ENCODE measurements at regions of chr9 and their contacts with region 1.

Region 1: DNA sequence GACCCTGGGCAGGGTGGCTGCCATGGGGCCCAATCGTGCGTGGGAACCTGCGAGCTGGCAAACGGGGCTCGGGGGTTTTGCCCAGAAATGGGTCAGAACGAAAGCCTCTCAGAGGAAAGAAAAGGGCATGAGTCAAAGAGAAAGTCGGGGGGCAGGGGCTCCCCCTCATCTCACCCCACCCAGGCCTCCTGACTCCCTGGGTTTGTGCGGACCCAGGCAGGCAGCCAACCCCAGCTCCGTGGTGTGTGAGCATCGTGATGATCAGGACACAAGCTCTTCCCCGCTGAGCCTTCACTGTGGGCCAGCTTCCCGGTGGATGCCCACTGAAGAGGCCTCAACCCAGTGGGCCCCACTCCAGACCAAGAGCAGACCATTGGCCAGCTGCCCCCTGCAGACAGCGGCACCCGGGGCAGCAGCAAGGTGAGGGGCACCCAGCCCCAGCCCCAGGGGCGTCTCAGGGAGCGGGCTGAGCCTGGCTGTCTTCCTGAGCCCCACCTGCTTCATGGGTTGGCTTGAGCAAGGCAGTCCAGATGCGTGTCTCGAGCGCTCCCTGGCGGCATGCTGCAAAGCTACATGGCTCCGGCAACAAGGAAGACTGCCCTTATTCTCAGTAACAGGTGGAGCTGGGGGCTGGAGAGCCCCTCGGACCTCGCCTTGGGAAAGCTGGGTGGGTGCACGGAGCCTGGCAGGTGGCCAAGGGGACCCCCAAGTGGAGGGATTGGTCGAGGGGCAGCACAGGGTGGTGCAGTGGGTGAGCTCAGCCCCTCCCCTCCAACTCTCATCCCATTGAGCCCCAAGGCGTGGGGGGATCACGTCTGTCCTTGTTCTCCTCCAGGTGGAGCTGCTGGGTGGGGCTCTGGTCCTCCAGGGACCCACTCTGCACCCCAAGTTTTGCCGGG is 3.2 kb upstream of the FUT7 start:
- DNase-seq: peak; percentile 81 to 92 (median 83)
- H3K4me3 ChIP-seq: peak overlapping the region; percentile 58
- H3K4me3 Mint-ChIP-seq: peak overlapping the region; percentile 72 to 89 (median 76)
- H3K27ac ChIP-seq: peak overlapping the region; percentile 38
- H3K27ac Mint-ChIP-seq: peak overlapping the region; percentile 75 to 96 (median 89)
- H3K4me1 ChIP-seq: peaks cover 40% of the 10 kb centered on the region
- H3K4me1 Mint-ChIP-seq: peaks cover 35 to 46% (median 36%) of the 10 kb centered on the region in 3 donors
- H3K27me3 ChIP-seq: no peaks in the 10 kb centered on the region
- H3K27me3 Mint-ChIP-seq: no peaks in the 10 kb centered on the region

Region 2: GRCh38 chr9:136799854-136800657 is 235.1 kb before region 1 on chr9:
- CTCF ChIA-PET with region 1: interaction called, 15 read pairs
- POLR2A ChIA-PET with region 1: no interaction called
- DNase-seq: peak; percentile 72 to 94 (median 88)
- H3K4me3 ChIP-seq: peak overlapping the region; percentile 66
- H3K4me3 Mint-ChIP-seq: peak overlapping the region; percentile 43 to 89 (median 83)
- H3K27ac ChIP-seq: peak overlapping the region; percentile 38
- H3K27ac Mint-ChIP-seq: peak overlapping the region in 6 of 8 donors; percentile 53 to 86 (median 77)
- H3K4me1 ChIP-seq: peaks cover 30% of the 10 kb centered on the region
- H3K4me1 Mint-ChIP-seq: peaks cover 11 to 28% (median 25%) of the 10 kb centered on the region in 3 donors
- H3K27me3 ChIP-seq: no peaks in the 10 kb centered on the region
- H3K27me3 Mint-ChIP-seq: peaks cover 0 to 6% of the 10 kb centered on the region in 2 donors

Region 3: GRCh38 chr9:136885950-136886578 is 149.0 kb before region 1 on chr9 and contains the start of gene TRAF2:
- CTCF ChIA-PET with region 1: interaction called, 10 read pairs
- POLR2A ChIA-PET with region 1: no interaction called
- DNase-seq: peak; percentile 96 to 98 (median 96)
- H3K4me3 ChIP-seq: peak within 1 kb of the TSS; percentile 75
- H3K4me3 Mint-ChIP-seq: peak within 1 kb of the TSS; percentile 84 to 94 (median 86)
- H3K27ac ChIP-seq: peak within 1 kb of the TSS; percentile 79
- H3K27ac Mint-ChIP-seq: peak within 1 kb of the TSS; percentile 83 to 99 (median 95)
- H3K4me1 ChIP-seq: peaks cover 41% of the 10 kb centered on the region
- H3K4me1 Mint-ChIP-seq: peaks cover 26 to 64% (median 32%) of the 10 kb centered on the region in 3 donors
- H3K27me3 ChIP-seq: no peaks in the 10 kb centered on the region
- H3K27me3 Mint-ChIP-seq: no peaks in the 10 kb centered on the region
- total RNA-seq, gene TRAF2: 53.2 to 60.5 TPM

Region 4: DNA sequence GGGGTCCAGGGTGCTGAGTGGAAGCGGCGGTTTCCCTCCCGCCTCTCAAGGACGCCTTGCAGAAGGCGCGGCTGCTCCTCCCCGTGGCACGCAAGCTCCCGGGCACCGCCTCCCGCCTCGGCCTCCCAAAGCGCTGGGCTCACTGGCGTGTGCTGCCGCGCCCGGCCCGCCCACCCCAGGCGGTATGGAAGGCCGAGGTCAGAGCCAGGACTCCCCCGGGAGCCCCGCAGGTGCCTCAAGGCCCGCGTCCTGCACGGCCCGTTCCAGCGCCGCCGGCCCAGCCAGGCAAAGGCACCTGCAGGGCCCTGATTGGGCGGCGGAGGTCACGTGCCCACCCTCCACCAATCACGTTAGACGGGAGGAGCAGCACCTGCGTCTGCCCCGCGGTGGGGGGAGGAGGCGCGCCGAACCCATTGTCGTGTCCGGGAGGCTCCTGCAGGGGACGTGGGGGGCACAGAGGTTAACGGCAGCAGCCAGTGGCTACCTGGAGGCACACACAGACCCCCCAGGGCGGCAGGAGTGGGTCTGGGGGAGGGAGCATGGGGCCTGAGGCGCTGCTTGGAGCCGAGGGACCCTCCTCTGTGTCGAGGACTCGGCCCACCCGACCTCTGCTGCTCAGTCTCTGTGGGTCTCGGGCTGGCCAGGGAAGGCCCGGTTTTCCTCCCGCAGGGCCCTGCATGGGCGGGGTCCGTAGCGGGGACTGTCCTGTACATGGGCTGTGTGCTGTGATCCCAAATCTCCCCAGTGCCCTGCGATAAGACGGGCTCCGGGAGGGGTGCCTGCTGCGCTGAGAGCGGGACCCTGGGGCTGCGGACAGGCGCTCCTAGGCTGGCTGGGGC is 85.1 kb before region 1 on chr9:
- CTCF ChIA-PET with region 1: interaction called, 159 read pairs
- POLR2A ChIA-PET with region 1: interaction called, 18 read pairs
- DNase-seq: peak; percentile 93 to 98 (median 97)
- H3K4me3 ChIP-seq: peak overlapping the region; percentile 77
- H3K4me3 Mint-ChIP-seq: peak overlapping the region; percentile 81 to 92 (median 87)
- H3K27ac ChIP-seq: peak overlapping the region; percentile 78
- H3K27ac Mint-ChIP-seq: peak overlapping the region; percentile 80 to 94 (median 86)
- H3K4me1 ChIP-seq: peaks cover 14% of the 10 kb centered on the region
- H3K4me1 Mint-ChIP-seq: peaks cover 0 to 34% (median 7%) of the 10 kb centered on the region in 3 donors
- H3K27me3 ChIP-seq: no peaks in the 10 kb centered on the region
- H3K27me3 Mint-ChIP-seq: no peaks in the 10 kb centered on the region

Region 5: DNA sequence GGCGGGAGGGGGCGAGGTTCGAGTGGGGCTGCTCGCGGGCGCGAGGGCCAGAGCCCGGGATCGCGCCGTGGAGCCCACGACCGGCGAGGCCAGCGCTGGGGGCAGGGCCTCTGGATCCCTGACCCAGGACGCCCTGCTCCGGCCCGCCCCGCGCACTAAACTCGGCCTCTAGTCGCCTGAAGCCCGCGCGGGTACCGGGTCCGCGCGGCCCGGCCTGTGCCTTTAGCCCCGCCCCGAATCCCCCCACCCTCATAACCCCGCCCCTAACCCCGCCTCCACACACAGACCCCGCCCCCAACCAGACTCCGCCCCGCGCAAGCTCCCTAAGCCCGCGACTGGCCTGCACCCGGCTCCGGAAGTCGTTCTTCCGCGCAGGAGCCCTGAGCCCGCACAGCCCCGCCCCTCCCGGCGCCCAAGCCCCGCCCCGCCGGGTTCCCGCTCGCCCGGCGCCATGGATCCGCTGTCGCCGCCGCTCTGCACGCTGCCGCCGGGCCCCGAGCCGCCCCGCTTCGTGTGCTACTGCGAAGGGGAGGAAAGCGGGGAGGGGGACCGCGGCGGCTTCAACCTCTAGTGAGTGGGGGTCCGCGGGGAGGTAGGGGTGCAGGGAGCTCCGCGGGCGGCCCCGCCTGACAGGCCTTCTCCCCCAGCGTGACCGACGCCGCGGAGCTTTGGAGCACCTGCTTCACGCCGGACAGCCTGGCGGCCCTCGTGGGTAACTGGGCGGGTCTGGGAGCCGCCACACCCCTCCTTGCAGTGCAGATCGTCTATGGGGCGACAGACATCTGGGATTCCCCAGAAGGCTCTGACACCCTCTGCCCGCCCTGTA is 42.9 kb before region 1 on chr9 and contains the start of gene PAXX:
- CTCF ChIA-PET with region 1: interaction called, 72 read pairs
- POLR2A ChIA-PET with region 1: interaction called, 5 read pairs
- DNase-seq: peak; percentile 91 to 95 (median 92)
- H3K4me3 ChIP-seq: peak within 1 kb of the TSS; percentile 65
- H3K4me3 Mint-ChIP-seq: peak within 1 kb of the TSS; percentile 84 to 95 (median 87)
- H3K27ac ChIP-seq: peak within 1 kb of the TSS; percentile 83
- H3K27ac Mint-ChIP-seq: peak within 1 kb of the TSS; percentile 92 to 98 (median 96)
- H3K4me1 ChIP-seq: peaks cover 28% of the 10 kb centered on the region
- H3K4me1 Mint-ChIP-seq: peaks cover 19 to 50% (median 22%) of the 10 kb centered on the region in 3 donors
- H3K27me3 ChIP-seq: no peaks in the 10 kb centered on the region
- H3K27me3 Mint-ChIP-seq: peaks cover 2 to 3% of the 10 kb centered on the region in 2 donors
- total RNA-seq, gene PAXX: 78.4 to 82.2 TPM

Region 6: DNA sequence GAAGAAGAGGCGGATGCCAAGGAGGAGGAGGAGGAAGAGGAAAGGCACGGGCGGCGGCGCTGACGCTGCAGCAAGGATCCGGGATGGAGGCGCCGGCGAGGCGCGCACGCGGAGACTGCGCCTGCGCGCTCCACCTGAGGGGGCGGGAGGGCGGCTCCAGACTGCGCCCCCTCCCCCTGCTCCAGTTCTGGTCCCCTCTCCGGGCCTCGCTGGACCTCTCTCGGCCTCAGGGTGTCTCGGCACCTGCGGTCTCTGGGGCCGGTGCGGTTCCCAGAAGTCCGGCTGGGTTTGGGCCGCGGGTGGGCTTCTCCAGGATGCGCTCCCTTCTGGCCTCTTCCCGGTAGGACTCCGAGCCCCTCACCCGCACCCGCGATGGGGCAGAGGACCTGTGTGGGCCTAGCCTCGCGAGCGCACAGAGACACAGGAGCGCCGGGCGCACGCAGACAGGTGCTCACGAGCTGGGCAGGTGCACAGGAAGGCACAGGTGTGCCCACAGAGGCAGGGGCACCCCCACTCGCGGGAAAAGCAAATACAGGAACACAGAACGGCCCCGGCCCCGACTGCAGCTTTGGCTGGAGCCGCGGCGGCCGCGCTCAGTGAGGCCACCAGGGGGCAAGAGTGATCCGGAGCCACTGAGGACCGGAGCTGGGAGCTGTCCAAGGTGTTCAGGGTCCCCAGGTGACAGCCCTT is 11.1 kb after region 1 on chr9 and contains the start of gene NPDC1:
- CTCF ChIA-PET with region 1: interaction called, 28 read pairs
- POLR2A ChIA-PET with region 1: interaction called, 3 read pairs
- DNase-seq: peak; percentile 68 to 83 (median 71)
- H3K4me3 ChIP-seq: peak within 1 kb of the TSS; percentile 47
- H3K4me3 Mint-ChIP-seq: peak within 1 kb of the TSS; percentile 70 to 87 (median 86)
- H3K27ac ChIP-seq: peak within 1 kb of the TSS; percentile 24
- H3K27ac Mint-ChIP-seq: peak within 1 kb of the TSS in 4 of 8 donors; percentile 38 to 60 (median 44)
- H3K4me1 ChIP-seq: peaks cover 27% of the 10 kb centered on the region
- H3K4me1 Mint-ChIP-seq: peaks cover 6 to 26% (median 13%) of the 10 kb centered on the region in 3 donors
- H3K27me3 ChIP-seq: peaks cover 49% of the 10 kb centered on the region
- H3K27me3 Mint-ChIP-seq: peaks cover 28 to 35% of the 10 kb centered on the region in 2 donors
- total RNA-seq, gene NPDC1: 24.6 to 27.5 TPM